Posterior vena cava (tissue), 2 donors: ENCODE measurements at regions of chr5 and their contacts with region 1.

Region 1: GRCh38 chr5:130323804-130324454 is 419.7 kb downstream of the CHSY3 start:
- DNase-seq: no peak

Region 2: GRCh38 chr5:130279386-130279785 is 44.5 kb before region 1 on chr5:
- intact Hi-C with region 1: loop called in 1 of 2 experiments (anchors 2 kb)
- DNase-seq: no peak